Activated T-helper 2 cell treated with anti-CD3 and anti-CD28 coated beads, Interferon-gamma antibody, Interleukin-2, Interleukin-4, amounts not matched to agents 10 μg/mL and 5 μg/mL and 100 μg/mL, durations not matched to agents 14 hours and 24 hours and 36 hours (primary cell): ENCODE measurements at regions of chr1 and their contacts with region 1.

Region 1: DNA sequence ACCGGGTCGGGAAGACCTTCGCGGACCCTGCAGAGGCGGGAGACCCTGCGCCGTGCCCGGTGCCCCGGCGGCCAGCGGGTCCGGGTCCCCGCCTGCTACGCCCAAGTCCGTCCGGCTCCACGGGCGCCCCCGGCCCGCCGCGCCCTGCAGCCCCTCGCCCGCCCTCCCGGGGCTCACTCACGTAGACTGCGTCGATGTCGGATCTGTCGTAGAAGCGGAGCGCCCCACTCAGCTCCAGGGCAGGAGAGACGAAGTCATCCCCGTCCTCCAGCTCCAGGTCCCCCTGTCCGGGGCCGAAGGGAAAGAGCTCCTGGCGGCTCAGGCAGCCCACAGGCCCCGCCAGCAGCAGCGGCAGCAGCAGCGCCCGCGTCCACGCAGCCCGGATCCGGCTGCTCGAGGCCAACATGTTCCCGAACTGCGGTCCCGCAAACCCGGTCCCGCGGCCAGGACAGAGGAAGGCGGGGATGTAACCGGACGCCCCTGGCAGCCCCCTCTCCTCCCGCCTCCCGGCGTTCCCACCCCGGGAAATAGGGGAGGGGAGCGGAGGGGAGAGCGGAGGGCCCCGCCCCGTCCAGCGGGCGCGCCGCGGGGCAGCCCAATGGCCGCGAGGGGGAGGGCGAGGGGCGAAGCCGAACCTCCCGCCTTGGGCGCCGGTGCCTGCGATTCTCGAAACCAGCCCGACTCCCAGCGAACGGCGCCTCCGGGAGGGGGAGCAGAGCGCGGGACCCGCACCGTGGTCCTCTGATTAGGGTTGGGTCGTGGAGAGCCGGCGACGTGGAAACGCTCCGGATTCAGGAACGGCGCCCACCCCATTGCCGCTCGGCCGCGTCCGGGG is at the start of gene NID1:
- DNase-seq: no peak
- H3K4me3 Mint-ChIP-seq: peak within 1 kb of the TSS; percentile 54
- H3K27ac Mint-ChIP-seq: no peak within 1 kb of the TSS
- H3K4me1 Mint-ChIP-seq: peaks cover 25% of the 10 kb centered on the region
- H3K27me3 Mint-ChIP-seq: peaks cover 46% of the 10 kb centered on the region
- total RNA-seq, gene NID1: 0.39 and 0.55 TPM in 2 replicates

Region 2: GRCh38 chr1:235317168-235317567 is 747.7 kb before region 1 on chr1:
- intact Hi-C with region 1: no loop called
- DNase-seq: no peak
- H3K4me3 Mint-ChIP-seq: no peak overlapping the region
- H3K27ac Mint-ChIP-seq: peak overlapping the region; percentile 46
- H3K4me1 Mint-ChIP-seq: peaks cover 61% of the 10 kb centered on the region
- H3K27me3 Mint-ChIP-seq: no peaks in the 10 kb centered on the region

Region 3: DNA sequence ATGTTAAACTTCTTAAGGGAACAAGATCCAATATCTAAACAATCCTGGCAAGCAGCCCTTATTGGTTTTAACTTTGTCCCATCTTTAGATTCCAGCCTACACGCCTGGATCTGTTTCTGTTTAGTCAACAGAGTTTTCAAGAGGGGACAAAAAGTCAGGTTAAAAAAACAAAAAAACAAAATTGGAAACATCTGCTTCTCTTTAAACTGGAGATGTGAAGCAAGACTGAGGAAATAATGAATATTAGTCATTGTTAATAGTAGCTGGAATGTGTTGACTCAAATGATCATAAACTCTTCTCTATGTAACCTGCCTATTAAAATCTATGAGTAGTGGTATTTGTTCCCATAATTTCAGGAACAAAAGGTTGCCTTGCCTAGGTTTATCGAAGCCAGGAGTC is 55.0 kb before region 1 on chr1:
- intact Hi-C with region 1: loop called (anchors 10 kb)
- DNase-seq: no peak
- H3K4me3 Mint-ChIP-seq: no peak overlapping the region
- H3K27ac Mint-ChIP-seq: no peak overlapping the region
- H3K4me1 Mint-ChIP-seq: peaks cover 2% of the 10 kb centered on the region
- H3K27me3 Mint-ChIP-seq: peaks cover 2% of the 10 kb centered on the region